Cardiac septum (tissue), 1 donor: ENCODE measurements at regions of chr6 and their contacts with region 1.

Region 1: DNA sequence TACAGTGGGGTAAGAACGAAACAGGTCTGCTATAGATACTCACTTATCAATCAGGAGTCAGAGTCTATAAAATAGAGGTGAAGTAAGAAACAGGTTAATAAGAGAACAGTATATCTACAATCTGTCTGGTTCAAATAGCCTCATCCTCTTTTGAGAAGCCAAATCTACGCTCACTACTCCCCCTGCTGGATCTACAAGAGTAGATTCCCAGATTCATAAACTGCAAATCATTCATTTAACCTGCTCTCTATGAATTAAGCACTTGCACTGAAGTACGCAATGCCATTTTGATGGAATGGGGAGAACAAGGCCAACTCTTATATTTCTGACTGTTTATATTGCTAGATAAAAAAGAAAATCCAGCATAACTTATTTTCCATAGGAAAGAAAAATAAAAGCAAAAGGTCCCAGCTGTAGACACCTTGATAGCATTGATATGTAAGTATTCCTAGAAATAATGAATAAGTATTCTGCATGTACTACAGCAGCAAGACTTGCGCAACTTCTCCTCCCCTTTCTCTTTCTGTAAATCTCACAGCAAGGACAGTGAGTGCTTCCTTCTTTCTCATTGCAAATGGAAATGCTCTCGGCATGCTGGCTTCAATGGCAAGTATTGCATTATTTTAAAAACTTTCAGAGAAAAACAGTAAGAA is 92.3 kb downstream of the RFX6 start:
- DNase-seq: no peak

Region 2: GRCh38 chr6:116779573-116780164 is 189.7 kb before region 1 on chr6:
- intact Hi-C with region 1: loop called (anchors 10 kb)
- DNase-seq: no peak

Region 3: GRCh38 chr6:116881236-116881635 is 88.1 kb before region 1 on chr6:
- intact Hi-C with region 1: loop called (anchors 5 kb)
- DNase-seq: no peak

Region 4: DNA sequence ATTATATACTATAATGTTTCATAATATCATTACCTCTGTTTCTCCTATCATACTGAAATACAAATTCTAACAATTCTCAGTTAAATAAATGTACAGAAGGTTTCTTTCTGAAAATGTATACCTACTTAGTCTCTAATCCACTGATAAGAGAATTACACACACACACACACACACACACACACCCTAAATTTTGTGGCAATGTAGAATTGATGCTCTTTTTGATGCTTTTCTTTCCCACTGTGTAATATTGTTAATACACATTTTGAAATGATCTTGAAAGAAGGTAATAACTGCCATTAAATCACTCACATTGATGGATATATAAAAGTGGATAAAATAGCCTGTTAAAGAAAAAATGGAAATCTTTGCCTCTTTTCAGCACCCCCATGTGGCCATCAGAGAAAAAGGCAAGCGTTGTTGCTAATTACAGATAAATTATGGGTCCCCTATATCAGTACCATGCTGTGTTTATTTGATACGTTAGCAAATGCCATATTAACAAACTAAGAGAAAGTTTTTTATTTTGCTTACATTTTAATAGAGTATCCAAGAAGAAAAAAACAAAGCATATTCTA is 219.4 kb after region 1 on chr6:
- intact Hi-C with region 1: loop called (anchors 2 kb)
- DNase-seq: no peak

Region 5: GRCh38 chr6:117265410-117266256 is 296.3 kb after region 1 on chr6 and contains the start of gene VGLL2:
- intact Hi-C with region 1: loop called (anchors 10 kb)
- DNase-seq: no peak
- total RNA-seq, gene VGLL2: 38.1 TPM

Region 6: DNA sequence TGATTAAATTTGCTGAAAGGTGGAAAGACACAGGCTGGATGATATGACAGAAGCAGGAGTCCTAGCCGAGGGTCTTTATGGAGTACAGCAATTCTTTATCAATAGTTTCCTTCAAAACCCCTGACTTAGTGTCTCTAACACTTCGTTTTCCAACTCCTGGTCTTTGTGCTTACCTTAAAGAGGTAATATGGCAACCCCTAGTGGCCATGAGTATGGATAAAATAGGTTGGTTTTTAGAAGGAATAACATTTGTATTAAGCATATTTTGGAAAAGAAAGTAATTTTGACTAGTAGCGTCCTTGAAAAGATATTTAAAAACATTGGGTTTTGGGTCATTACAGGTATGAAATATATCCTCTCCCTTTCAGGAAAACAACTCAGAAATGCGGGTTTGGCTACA is 347.9 kb after region 1 on chr6:
- intact Hi-C with region 1: loop called (anchors 5 kb)
- DNase-seq: no peak